ENCODE measurements at regions of chr13 and their contacts with region 1.

Region 1: GRCh38 chr13:99501184-99501847 is at the start of gene TM9SF2:
- DNase-seq: peak; percentile 98
- ATAC-seq: peak; percentile 61
- H3K4me3 Mint-ChIP-seq: peak within 1 kb of the TSS; percentile 97
- H3K27ac Mint-ChIP-seq: peak within 1 kb of the TSS; percentile 97
- H3K4me1 Mint-ChIP-seq: peaks cover 84% of the 10 kb centered on the region
- H3K27me3 Mint-ChIP-seq: no peaks in the 10 kb centered on the region
- CTCF ChIP-seq: no peak
- total RNA-seq, gene TM9SF2: 68.1 and 76.0 TPM in 2 replicates

Region 2: GRCh38 chr13:99176309-99177276 is 324.7 kb before region 1 on chr13:
- CTCF ChIA-PET with region 1: interaction called, 4 read pairs
- POLR2A ChIA-PET with region 1: interaction called, 4 read pairs
- intact Hi-C with region 1: loop called (anchors 2 kb)
- DNase-seq: peak; percentile 64
- ATAC-seq: peak; percentile 90
- H3K4me3 Mint-ChIP-seq: peak overlapping the region; percentile 58
- H3K27ac Mint-ChIP-seq: peak overlapping the region; percentile 24
- H3K4me1 Mint-ChIP-seq: peaks cover 43% of the 10 kb centered on the region
- H3K27me3 Mint-ChIP-seq: peaks cover 2% of the 10 kb centered on the region
- CTCF ChIP-seq: no peak

Region 3: DNA sequence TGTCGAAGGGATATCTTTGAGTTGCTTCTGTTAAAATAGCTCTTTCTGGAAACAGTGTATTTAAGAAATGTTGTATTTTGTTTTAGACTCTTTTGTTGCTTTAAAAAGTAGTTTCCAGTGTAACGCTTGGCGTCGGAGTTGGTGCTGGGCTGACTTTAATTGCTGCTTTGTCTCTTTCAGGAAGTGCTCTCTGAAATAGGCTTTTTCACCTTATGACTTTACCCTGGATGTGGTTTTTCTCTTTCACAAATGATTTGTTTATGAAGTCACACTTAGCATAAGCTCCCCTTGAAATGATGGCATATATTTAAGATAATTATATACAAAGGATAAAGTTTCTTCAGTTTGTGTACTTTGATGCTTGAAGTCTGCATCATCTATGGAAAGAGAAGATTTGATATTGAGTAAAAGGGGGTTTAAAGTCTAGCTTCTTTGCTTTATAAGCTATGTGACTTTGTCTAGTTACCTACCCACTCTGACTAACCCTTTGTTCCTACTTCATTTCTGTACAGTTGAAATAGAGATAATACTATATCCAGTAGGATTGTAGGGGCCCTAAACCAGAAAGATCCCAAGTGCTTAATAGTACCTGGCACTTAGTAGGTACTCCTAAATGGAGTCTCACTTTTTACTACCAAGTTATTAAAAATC is 243.0 kb before region 1 on chr13 and contains the start of gene GPR18:
- CTCF ChIA-PET with region 1: no interaction called
- POLR2A ChIA-PET with region 1: interaction called, 4 read pairs
- intact Hi-C with region 1: loop called (anchors 5 kb)
- DNase-seq: no peak
- ATAC-seq: peak; percentile 65
- H3K4me3 Mint-ChIP-seq: peak within 1 kb of the TSS; percentile 94
- H3K27ac Mint-ChIP-seq: peak within 1 kb of the TSS; percentile 96
- H3K4me1 Mint-ChIP-seq: peaks cover 86% of the 10 kb centered on the region
- H3K27me3 Mint-ChIP-seq: no peaks in the 10 kb centered on the region
- CTCF ChIP-seq: no peak
- total RNA-seq, gene GPR18: 29.0 and 32.4 TPM in 2 replicates

Region 4: DNA sequence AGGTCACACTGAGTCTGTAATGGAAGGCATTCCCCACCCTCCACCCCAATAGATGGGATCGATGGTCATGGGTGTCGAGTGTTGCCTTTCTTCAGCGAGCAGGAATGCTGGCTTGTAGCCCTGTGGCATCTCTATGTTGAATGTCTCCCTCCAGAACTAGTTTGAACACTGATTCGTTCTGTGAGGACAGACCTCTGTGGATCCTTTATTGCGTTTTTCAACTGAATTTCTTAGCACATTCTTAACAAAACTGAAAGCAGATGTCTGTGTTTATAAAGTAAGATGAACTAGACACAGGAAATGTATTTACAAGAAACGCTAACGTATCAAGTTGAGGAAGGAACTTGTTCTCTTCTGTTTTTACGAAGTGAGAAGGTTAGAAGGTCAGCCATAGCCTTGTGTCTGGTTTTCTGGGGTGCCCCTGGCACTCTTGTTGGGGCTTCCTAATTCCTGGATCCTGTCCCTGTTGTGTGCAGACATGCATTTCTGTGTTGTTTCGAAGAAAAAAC is 36.8 kb before region 1 on chr13:
- CTCF ChIA-PET with region 1: no interaction called
- POLR2A ChIA-PET with region 1: no interaction called
- intact Hi-C with region 1: loop called (anchors 5 kb)
- DNase-seq: no peak
- ATAC-seq: no peak
- H3K4me3 Mint-ChIP-seq: peak overlapping the region; percentile 11
- H3K27ac Mint-ChIP-seq: peak overlapping the region; percentile 78
- H3K4me1 Mint-ChIP-seq: peaks cover 25% of the 10 kb centered on the region
- H3K27me3 Mint-ChIP-seq: no peaks in the 10 kb centered on the region
- CTCF ChIP-seq: no peak

Region 5: DNA sequence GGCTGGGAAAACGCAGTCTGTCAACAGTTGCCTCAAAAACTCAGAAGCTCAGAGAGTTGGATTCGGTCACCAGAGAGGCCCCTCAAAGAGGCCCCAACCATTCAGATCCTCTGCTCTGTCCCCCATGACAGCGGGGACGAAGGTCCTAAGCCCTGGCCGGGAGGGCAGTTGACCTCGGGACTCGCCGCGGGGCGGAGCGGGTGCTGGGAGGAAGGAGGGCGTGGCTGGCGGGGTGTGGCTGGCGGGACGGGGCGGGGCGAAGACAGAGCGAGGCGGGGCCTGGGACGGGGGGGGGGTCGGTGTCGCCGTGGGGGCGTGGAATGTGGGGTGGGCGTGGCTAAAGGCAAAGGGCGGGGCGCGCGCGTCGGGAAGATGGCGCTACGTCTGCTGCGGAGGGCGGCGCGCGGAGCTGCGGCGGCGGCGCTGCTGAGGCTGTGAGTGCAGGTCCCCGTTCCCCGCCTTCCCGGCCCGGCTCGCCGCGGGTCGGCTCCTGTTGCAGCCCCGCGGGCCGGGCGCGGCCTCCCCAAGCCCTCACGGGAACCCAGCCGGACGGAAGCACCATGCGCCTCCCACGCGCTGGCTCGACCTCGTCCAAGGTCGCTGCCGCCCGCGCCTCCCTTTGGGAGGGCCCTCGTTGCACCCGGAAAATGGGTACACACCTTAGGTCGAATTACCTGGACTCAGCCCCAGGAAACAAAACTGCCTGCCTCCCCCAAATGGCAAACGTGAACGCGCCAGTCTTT is 105.2 kb after region 1 on chr13:
- CTCF ChIA-PET with region 1: interaction called, 3 read pairs
- POLR2A ChIA-PET with region 1: interaction called, 6 read pairs
- intact Hi-C with region 1: loop called (anchors 1 kb)
- DNase-seq: peak; percentile 86
- ATAC-seq: peak; percentile 91
- H3K4me3 Mint-ChIP-seq: peak within 1 kb of the TSS; percentile 91
- H3K27ac Mint-ChIP-seq: peak within 1 kb of the TSS; percentile 86
- H3K4me1 Mint-ChIP-seq: peaks cover 38% of the 10 kb centered on the region
- H3K27me3 Mint-ChIP-seq: no peaks in the 10 kb centered on the region
- CTCF ChIP-seq: no peak

Measured in activated B cell treated with CpG ODN at 0.5 μM for 24 hours (primary cell).